ENCODE measurements at regions of chr10 and their contacts with region 1.

Region 1: GRCh38 chr10:98467506-98468346 is 21.0 kb upstream of the HPS1 start:
- DNase-seq: peak; percentile 64 to 76 (median 72)
- H3K4me3 ChIP-seq: peak overlapping the region; percentile 50 to 83 (median 61)
- H3K4me3 Mint-ChIP-seq: peak overlapping the region; percentile 91 to 98
- H3K27ac ChIP-seq: no peak overlapping the region
- H3K27ac Mint-ChIP-seq: peak overlapping the region in 2 of 7 donors; percentile 38 to 51
- H3K4me1 ChIP-seq: peaks cover 0 to 9% of the 10 kb centered on the region in 2 donors
- H3K4me1 Mint-ChIP-seq: peaks cover 11% of the 10 kb centered on the region
- H3K27me3 ChIP-seq: peaks cover 6 to 13% of the 10 kb centered on the region in 2 donors
- H3K27me3 Mint-ChIP-seq: peaks cover 11 to 21% (median 13%) of the 10 kb centered on the region in 3 donors
- CTCF ChIP-seq: peak; percentile 86

Region 2: GRCh38 chr10:98349508-98349922 is 118.2 kb before region 1 on chr10:
- intact Hi-C with region 1: no loop called
- DNase-seq: peak; percentile 37 to 57 (median 40)
- H3K4me3 ChIP-seq: peak overlapping the region; percentile 26 to 72 (median 28)
- H3K4me3 Mint-ChIP-seq: peak overlapping the region; percentile 83 to 94
- H3K27ac ChIP-seq: peak overlapping the region; percentile 29 to 56
- H3K27ac Mint-ChIP-seq: peak overlapping the region; percentile 36 to 87 (median 82)
- H3K4me1 ChIP-seq: peaks cover 33 to 40% of the 10 kb centered on the region in 2 donors
- H3K4me1 Mint-ChIP-seq: peaks cover 46% of the 10 kb centered on the region
- H3K27me3 ChIP-seq: no peaks in the 10 kb centered on the region
- H3K27me3 Mint-ChIP-seq: peaks cover 1 to 3% (median 2%) of the 10 kb centered on the region in 3 donors
- CTCF ChIP-seq: no peak

Region 3: GRCh38 chr10:98376485-98376884 is 91.2 kb before region 1 on chr10:
- intact Hi-C with region 1: no loop called
- DNase-seq: no peak
- H3K4me3 ChIP-seq: no peak overlapping the region
- H3K4me3 Mint-ChIP-seq: no peak overlapping the region
- H3K27ac ChIP-seq: no peak overlapping the region
- H3K27ac Mint-ChIP-seq: no peak overlapping the region
- H3K4me1 ChIP-seq: no peaks in the 10 kb centered on the region
- H3K4me1 Mint-ChIP-seq: peaks cover 6% of the 10 kb centered on the region
- H3K27me3 ChIP-seq: no peaks in the 10 kb centered on the region
- H3K27me3 Mint-ChIP-seq: peaks cover 1 to 12% (median 11%) of the 10 kb centered on the region in 3 donors
- CTCF ChIP-seq: no peak

Region 4: GRCh38 chr10:98664331-98665042 is 196.8 kb after region 1 on chr10:
- intact Hi-C with region 1: loop called (anchors 2 to 5 kb)
- DNase-seq: peak; percentile 12 to 46 (median 17)
- H3K4me3 ChIP-seq: no peak overlapping the region
- H3K4me3 Mint-ChIP-seq: no peak overlapping the region
- H3K27ac ChIP-seq: no peak overlapping the region
- H3K27ac Mint-ChIP-seq: no peak overlapping the region
- H3K4me1 ChIP-seq: no peaks in the 10 kb centered on the region
- H3K4me1 Mint-ChIP-seq: no peaks in the 10 kb centered on the region
- H3K27me3 ChIP-seq: no peaks in the 10 kb centered on the region
- H3K27me3 Mint-ChIP-seq: peaks cover 4 to 14% (median 9%) of the 10 kb centered on the region in 3 donors
- CTCF ChIP-seq: peak; percentile 74

Region 5: GRCh38 chr10:99042051-99042771 is 574.5 kb after region 1 on chr10:
- intact Hi-C with region 1: loop called in 1 of 2 experiments (anchors 5 kb)
- DNase-seq: no peak
- H3K4me3 ChIP-seq: no peak overlapping the region
- H3K4me3 Mint-ChIP-seq: no peak overlapping the region
- H3K27ac ChIP-seq: no peak overlapping the region
- H3K27ac Mint-ChIP-seq: peak overlapping the region in 1 of 7 donors; percentile 2
- H3K4me1 ChIP-seq: no peaks in the 10 kb centered on the region
- H3K4me1 Mint-ChIP-seq: no peaks in the 10 kb centered on the region
- H3K27me3 ChIP-seq: no peaks in the 10 kb centered on the region
- H3K27me3 Mint-ChIP-seq: peaks cover 0 to 3% (median 2%) of the 10 kb centered on the region in 3 donors
- CTCF ChIP-seq: no peak

Region 6: DNA sequence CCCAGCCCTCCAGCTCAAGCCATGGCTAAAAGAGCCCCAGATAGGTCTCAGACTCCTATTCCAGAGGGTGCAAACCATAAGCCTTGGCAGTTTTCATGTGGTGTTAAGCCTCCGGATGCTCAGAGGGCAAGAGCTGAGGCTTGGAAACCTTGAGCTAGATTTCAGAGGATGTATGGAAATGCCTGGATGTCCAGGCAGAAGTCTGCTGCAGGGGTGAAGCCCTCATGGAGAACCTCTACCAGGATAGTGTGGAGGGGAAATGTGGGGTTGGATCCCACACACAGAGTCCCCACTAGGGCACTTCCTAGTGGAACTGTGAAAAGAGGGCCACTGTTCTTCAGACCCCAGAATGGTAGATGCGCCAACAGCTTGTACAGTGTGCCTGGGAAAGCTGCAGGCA is 781.1 kb after region 1 on chr10:
- intact Hi-C with region 1: loop called (anchors 5 kb)
- DNase-seq: no peak
- H3K4me3 ChIP-seq: no peak overlapping the region
- H3K4me3 Mint-ChIP-seq: no peak overlapping the region
- H3K27ac ChIP-seq: no peak overlapping the region
- H3K27ac Mint-ChIP-seq: no peak overlapping the region
- H3K4me1 ChIP-seq: no peaks in the 10 kb centered on the region
- H3K4me1 Mint-ChIP-seq: no peaks in the 10 kb centered on the region
- H3K27me3 ChIP-seq: no peaks in the 10 kb centered on the region
- H3K27me3 Mint-ChIP-seq: peaks cover 2 to 4% (median 4%) of the 10 kb centered on the region in 3 donors
- CTCF ChIP-seq: no peak

Measured in CD14-positive monocyte (primary cell).